ENCODE measurements at regions of chr5 and their contacts with region 1.

Region 1: GRCh38 chr5:14650052-14650451 is 14.5 kb upstream of the OTULIN start:
- DNase-seq: no peak
- ATAC-seq: no peak
- H3K4me3 ChIP-seq: no peak overlapping the region
- H3K4me3 Mint-ChIP-seq: no peak overlapping the region
- H3K27ac ChIP-seq: no peak overlapping the region
- H3K27ac Mint-ChIP-seq: no peak overlapping the region
- H3K4me1 ChIP-seq: no peaks in the 10 kb centered on the region
- H3K4me1 Mint-ChIP-seq: peaks cover 0 to 17% (median 2%) of the 10 kb centered on the region in 7 donors
- H3K27me3 ChIP-seq: no peaks in the 10 kb centered on the region
- H3K27me3 Mint-ChIP-seq: peaks cover 10 to 40% (median 19%) of the 10 kb centered on the region in 5 donors

Region 2: DNA sequence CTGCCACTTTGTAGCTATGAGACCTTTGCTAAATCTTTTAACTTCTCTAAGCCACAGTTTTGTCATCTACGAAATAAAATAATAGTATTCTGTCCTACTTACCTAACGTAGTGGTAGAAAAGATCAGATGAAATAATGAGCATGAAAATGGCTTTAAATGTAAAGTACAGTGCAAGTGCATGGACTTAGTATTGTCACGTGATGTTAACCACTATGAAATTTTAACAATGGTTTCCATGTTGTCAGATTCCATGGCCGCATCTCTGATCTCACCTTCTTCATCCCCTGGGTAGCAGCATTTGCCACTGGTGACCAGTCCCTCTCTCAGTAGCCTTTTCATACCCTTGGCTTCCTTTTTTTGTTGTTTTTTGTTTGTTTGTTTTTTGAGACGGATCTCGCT is 751.5 kb before region 1 on chr5:
- CTCF ChIA-PET with region 1: no interaction called
- POLR2A ChIA-PET with region 1: no interaction called
- intact Hi-C with region 1: no loop called
- DNase-seq: no peak
- ATAC-seq: no peak
- H3K4me3 ChIP-seq: no peak overlapping the region
- H3K4me3 Mint-ChIP-seq: no peak overlapping the region
- H3K27ac ChIP-seq: no peak overlapping the region
- H3K27ac Mint-ChIP-seq: no peak overlapping the region
- H3K4me1 ChIP-seq: no peaks in the 10 kb centered on the region
- H3K4me1 Mint-ChIP-seq: no peaks in the 10 kb centered on the region
- H3K27me3 ChIP-seq: no peaks in the 10 kb centered on the region
- H3K27me3 Mint-ChIP-seq: peaks cover 0 to 12% (median 0%) of the 10 kb centered on the region in 5 donors

Region 3: GRCh38 chr5:14351845-14352712 is 298.0 kb before region 1 on chr5:
- CTCF ChIA-PET with region 1: interaction called, 37 read pairs
- POLR2A ChIA-PET with region 1: interaction called, 3 read pairs
- intact Hi-C with region 1: loop called (anchors 1 kb)
- DNase-seq: peak; percentile 22 to 64 (median 50)
- ATAC-seq: peak; percentile 94
- H3K4me3 ChIP-seq: no peak overlapping the region
- H3K4me3 Mint-ChIP-seq: no peak overlapping the region
- H3K27ac ChIP-seq: no peak overlapping the region
- H3K27ac Mint-ChIP-seq: no peak overlapping the region
- H3K4me1 ChIP-seq: no peaks in the 10 kb centered on the region
- H3K4me1 Mint-ChIP-seq: peaks cover 0 to 4% (median 0%) of the 10 kb centered on the region in 7 donors
- H3K27me3 ChIP-seq: no peaks in the 10 kb centered on the region
- H3K27me3 Mint-ChIP-seq: peaks cover 0 to 8% (median 0%) of the 10 kb centered on the region in 5 donors

Region 4: GRCh38 chr5:14357851-14358250 is 292.2 kb before region 1 on chr5:
- CTCF ChIA-PET with region 1: interaction called, 124 read pairs
- POLR2A ChIA-PET with region 1: interaction called, 3 read pairs
- intact Hi-C with region 1: no loop called
- DNase-seq: no peak
- ATAC-seq: no peak
- H3K4me3 ChIP-seq: no peak overlapping the region
- H3K4me3 Mint-ChIP-seq: no peak overlapping the region
- H3K27ac ChIP-seq: no peak overlapping the region
- H3K27ac Mint-ChIP-seq: no peak overlapping the region
- H3K4me1 ChIP-seq: no peaks in the 10 kb centered on the region
- H3K4me1 Mint-ChIP-seq: peaks cover 0 to 4% (median 0%) of the 10 kb centered on the region in 7 donors
- H3K27me3 ChIP-seq: no peaks in the 10 kb centered on the region
- H3K27me3 Mint-ChIP-seq: peaks cover 0 to 8% (median 0%) of the 10 kb centered on the region in 5 donors

Region 5: GRCh38 chr5:14364576-14365472 is 285.2 kb before region 1 on chr5:
- CTCF ChIA-PET with region 1: interaction called, 124 read pairs
- POLR2A ChIA-PET with region 1: interaction called, 3 read pairs
- intact Hi-C with region 1: loop called (anchors 1 kb)
- DNase-seq: no peak
- ATAC-seq: no peak
- H3K4me3 ChIP-seq: no peak overlapping the region
- H3K4me3 Mint-ChIP-seq: peak overlapping the region in 1 of 10 donors; percentile 48
- H3K27ac ChIP-seq: no peak overlapping the region
- H3K27ac Mint-ChIP-seq: peak overlapping the region in 4 of 9 donors; percentile 13 to 73 (median 46)
- H3K4me1 ChIP-seq: peaks cover 9 to 12% of the 10 kb centered on the region in 2 donors
- H3K4me1 Mint-ChIP-seq: peaks cover 17 to 55% (median 28%) of the 10 kb centered on the region in 7 donors
- H3K27me3 ChIP-seq: no peaks in the 10 kb centered on the region
- H3K27me3 Mint-ChIP-seq: no peaks in the 10 kb centered on the region

Measured in naive thymus-derived CD4-positive, alpha-beta T cell (primary cell).